Esophagus muscularis mucosa (tissue), 4 donors: ENCODE measurements at regions of chr22 and their contacts with region 1.

Region 1: GRCh38 chr22:30754971-30755756 is 60.5 kb downstream of the OSBP2 start:
- DNase-seq: no peak
- H3K4me3 ChIP-seq: no peak overlapping the region
- H3K27ac ChIP-seq: no peak overlapping the region
- H3K4me1 ChIP-seq: no peaks in the 10 kb centered on the region
- H3K27me3 ChIP-seq: no peaks in the 10 kb centered on the region
- CTCF ChIP-seq: peak; percentile 53 to 70 (median 63)
- EP300 ChIP-seq: no peak
- POLR2A ChIP-seq: no peak

Region 2: DNA sequence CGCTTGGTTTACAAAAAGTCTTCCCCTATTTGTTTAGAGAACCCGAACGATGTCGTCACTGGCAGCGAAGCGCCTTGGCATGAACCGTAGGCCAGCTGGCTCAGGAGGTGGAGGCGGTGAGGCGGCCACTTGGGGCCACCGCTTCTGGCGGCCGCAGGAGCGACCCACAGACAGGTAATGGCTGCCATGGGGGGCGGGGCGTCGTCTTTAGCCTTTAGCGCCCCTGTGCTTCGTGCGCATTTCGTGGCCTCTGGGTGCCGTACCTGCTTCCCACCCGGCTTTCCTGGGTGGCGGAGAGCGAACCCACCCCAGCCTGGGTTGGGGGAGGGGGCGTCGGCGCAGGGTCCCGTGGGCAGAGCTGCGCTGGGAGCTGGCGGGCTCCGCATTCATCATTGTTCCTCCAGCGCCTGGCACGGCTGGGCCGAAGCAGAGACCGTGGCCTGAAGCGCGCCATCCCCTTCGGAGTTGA is 61.0 kb before region 1 on chr22:
- intact Hi-C with region 1: loop called (anchors 10 kb)
- DNase-seq: no peak
- H3K4me3 ChIP-seq: peak overlapping the region; percentile 60 to 77 (median 64)
- H3K27ac ChIP-seq: peak overlapping the region in 2 of 4 donors; percentile 39 to 52
- H3K4me1 ChIP-seq: peaks cover 14 to 20% (median 16%) of the 10 kb centered on the region in 4 donors
- H3K27me3 ChIP-seq: no peaks in the 10 kb centered on the region
- CTCF ChIP-seq: no peak
- EP300 ChIP-seq: no peak
- POLR2A ChIP-seq: no peak